CD8-positive, alpha-beta T cell (primary cell): ENCODE measurements at regions of chr3 and their contacts with region 1.

Region 1: DNA sequence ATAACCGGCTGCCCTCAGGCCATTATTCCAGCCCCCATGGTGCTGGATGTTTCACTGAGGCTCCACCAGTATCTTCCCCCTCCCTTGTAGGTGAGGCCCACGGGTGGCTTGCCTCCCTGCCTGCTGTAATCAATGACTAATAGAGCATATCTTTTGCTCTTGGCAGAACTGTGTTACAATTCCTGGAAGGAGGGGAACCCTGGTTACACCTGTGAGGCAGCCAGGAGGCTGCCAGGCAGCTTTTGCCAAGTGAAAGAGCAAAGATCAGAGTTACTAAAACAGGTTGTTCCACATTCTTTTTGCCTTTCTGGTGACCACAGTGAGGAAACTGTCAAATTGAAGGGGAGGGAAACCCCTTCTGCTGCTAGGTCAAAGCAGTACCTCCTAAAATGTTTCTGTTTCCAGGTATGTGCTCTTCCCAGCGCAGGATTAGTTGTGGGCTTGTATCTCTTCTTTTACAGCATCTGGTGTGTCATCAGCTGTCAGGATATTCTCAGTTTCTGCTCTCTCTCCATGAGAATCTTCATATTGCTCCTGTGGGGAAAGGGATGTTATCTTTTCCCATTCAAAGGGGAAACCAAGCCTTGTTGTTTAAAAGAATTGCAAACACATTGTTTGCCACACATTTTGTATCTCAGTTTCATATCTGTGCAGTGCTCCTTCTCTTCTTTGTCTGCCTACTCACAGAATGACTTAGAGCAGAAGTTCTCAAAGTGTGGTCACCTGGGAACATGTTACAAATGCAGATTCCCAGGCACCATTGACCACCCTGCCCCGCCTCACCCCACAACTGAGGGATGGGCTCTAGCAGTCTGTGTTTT is 137.4 kb upstream of the UMPS start:
- DNase-seq: no peak
- ATAC-seq: no peak
- H3K4me3 ChIP-seq: no peak overlapping the region
- H3K4me3 Mint-ChIP-seq: no peak overlapping the region
- H3K27ac ChIP-seq: no peak overlapping the region
- H3K27ac Mint-ChIP-seq: no peak overlapping the region
- H3K4me1 ChIP-seq: no peaks in the 10 kb centered on the region
- H3K4me1 Mint-ChIP-seq: no peaks in the 10 kb centered on the region
- H3K27me3 ChIP-seq: no peaks in the 10 kb centered on the region
- H3K27me3 Mint-ChIP-seq: peaks cover 20% of the 10 kb centered on the region
- CTCF ChIP-seq: no peak

Region 2: GRCh38 chr3:124620600-124621063 is 27.8 kb after region 1 on chr3:
- CTCF ChIA-PET with region 1: no interaction called
- POLR2A ChIA-PET with region 1: no interaction called
- intact Hi-C with region 1: loop called in 1 of 2 experiments (anchors 1 kb)
- DNase-seq: peak in 7 of 9 experiments; percentile 9 to 55 (median 36)
- ATAC-seq: peak; percentile 51
- H3K4me3 ChIP-seq: no peak overlapping the region
- H3K4me3 Mint-ChIP-seq: peak overlapping the region; percentile 35
- H3K27ac ChIP-seq: peak overlapping the region in 1 of 2 experiments; percentile 52
- H3K27ac Mint-ChIP-seq: no peak overlapping the region
- H3K4me1 ChIP-seq: peaks cover 15% of the 10 kb centered on the region
- H3K4me1 Mint-ChIP-seq: peaks cover 20% of the 10 kb centered on the region
- H3K27me3 ChIP-seq: no peaks in the 10 kb centered on the region
- H3K27me3 Mint-ChIP-seq: no peaks in the 10 kb centered on the region
- CTCF ChIP-seq: no peak